ENCODE measurements at regions of chr1 and their contacts with region 1.

Region 1: GRCh38 chr1:155250633-155251449 is 4.4 kb downstream of the ENTREP3 start:
- DNase-seq: peak; percentile 97
- H3K4me3 Mint-ChIP-seq: peak overlapping the region; percentile 39
- H3K27ac Mint-ChIP-seq: peak overlapping the region; percentile 31
- H3K4me1 Mint-ChIP-seq: peaks cover 33% of the 10 kb centered on the region
- H3K27me3 Mint-ChIP-seq: no peaks in the 10 kb centered on the region

Region 2: GRCh38 chr1:155267373-155267772 is 16.5 kb after region 1 on chr1:
- CTCF ChIA-PET with region 1: interaction called, 90 read pairs
- POLR2A ChIA-PET with region 1: interaction called, 3 read pairs
- intact Hi-C with region 1: loop called (anchors 2 kb)
- DNase-seq: no peak
- H3K4me3 Mint-ChIP-seq: no peak overlapping the region
- H3K27ac Mint-ChIP-seq: no peak overlapping the region
- H3K4me1 Mint-ChIP-seq: peaks cover 23% of the 10 kb centered on the region
- H3K27me3 Mint-ChIP-seq: no peaks in the 10 kb centered on the region

Region 3: DNA sequence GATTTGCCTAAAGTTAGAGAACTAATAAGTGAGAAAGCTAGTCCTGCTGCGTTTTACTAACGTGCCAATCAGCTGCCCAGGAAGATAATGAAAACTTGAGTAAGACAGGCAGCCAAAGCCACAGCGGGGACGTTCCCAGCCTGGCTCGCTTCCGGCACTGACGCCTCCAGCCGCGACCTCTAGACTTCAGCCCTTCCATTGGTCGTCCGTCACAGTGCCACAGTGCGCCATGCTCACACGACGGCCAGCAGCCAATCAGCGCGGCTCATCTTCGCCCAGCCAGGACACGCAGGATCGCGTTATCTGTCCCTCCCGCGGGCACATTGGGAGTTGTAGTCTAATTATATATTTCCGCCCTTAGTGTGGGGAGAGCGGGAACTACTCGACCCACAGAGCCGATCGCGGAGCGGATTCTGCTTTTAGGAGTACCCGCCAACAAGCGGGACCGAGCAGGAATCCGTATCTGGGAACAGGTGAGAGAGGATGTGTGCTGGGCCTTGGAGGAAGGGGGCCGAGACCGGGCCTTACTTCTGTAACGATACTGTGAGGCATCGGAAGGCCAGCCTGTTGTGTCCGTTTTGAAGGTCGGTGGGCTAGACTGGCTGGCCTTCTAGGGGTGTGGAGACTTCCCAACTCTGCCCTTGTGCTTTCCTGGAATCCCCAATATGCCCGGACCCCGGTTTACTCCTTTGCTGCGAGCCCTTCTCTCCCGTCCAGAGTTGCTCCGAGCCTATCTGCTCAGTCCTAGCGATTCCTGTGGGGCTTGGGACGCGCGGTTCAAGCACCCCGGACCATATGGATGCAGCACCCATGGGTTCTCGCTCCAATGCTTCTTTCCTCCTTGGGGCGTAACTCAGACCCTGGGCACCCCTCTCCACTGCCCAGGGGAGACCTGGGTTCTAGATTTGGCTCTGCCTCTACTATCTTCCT is 57.9 kb after region 1 on chr1 and contains the start of gene FDPS:
- CTCF ChIA-PET with region 1: interaction called, 36 read pairs
- POLR2A ChIA-PET with region 1: interaction called, 7 read pairs
- intact Hi-C with region 1: loop called (anchors 1 kb)
- DNase-seq: peak; percentile 99
- H3K4me3 Mint-ChIP-seq: peak within 1 kb of the TSS; percentile 97
- H3K27ac Mint-ChIP-seq: peak within 1 kb of the TSS; percentile 99
- H3K4me1 Mint-ChIP-seq: peaks cover 29% of the 10 kb centered on the region
- H3K27me3 Mint-ChIP-seq: no peaks in the 10 kb centered on the region
- total RNA-seq, gene FDPS: 378 to 395 TPM

Region 4: GRCh38 chr1:155339515-155340097 is 88.8 kb after region 1 on chr1:
- CTCF ChIA-PET with region 1: interaction called, 15 read pairs
- POLR2A ChIA-PET with region 1: no interaction called
- intact Hi-C with region 1: no loop called
- DNase-seq: no peak
- H3K4me3 Mint-ChIP-seq: no peak overlapping the region
- H3K27ac Mint-ChIP-seq: no peak overlapping the region
- H3K4me1 Mint-ChIP-seq: no peaks in the 10 kb centered on the region
- H3K27me3 Mint-ChIP-seq: no peaks in the 10 kb centered on the region